Vagina (tissue), 2 donors: ENCODE measurements at regions of chr3 and their contacts with region 1.

Region 1: DNA sequence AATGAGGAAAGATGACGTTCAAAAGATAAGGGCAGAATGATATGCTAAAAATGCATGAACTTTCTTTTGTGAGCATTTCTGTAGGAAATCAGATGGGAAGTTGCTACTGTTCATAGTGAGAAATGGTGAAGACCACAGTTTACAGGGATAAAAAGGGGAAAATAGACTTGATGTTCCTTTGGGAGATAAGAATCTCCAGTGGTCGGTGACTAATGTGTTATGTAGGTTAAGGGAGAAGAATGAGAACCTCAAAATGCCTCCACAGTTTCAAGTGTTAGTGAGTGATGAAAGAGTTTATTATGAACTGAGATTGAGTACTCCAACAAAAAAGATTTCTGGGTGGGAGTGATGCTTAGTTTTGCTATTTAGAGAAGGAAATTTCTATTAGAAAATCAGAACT is 247.2 kb downstream of the LSAMP start:
- DNase-seq: no peak
- H3K4me3 ChIP-seq: no peak overlapping the region
- H3K27ac ChIP-seq: no peak overlapping the region
- H3K4me1 ChIP-seq: no peaks in the 10 kb centered on the region
- H3K27me3 ChIP-seq: no peaks in the 10 kb centered on the region
- CTCF ChIP-seq: no peak
- POLR2A ChIP-seq: no peak

Region 2: DNA sequence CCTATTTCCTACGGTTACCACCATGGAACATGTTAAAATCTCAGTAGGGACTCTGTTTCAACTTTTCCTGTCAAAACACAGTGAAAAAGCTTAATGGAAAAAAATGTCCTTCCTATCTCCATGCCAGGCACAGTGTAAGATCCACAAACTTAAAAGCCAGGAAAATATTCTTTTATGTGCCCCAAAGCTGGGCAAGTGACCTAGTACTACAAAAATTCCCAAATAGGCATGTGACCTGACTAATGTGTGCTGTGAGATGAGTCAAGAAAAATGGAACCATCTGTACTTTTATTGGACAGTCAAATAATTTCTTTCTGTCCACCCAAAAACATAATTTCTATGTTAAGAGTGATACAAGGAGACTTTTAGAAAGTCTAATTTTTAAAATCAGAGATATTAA is 1457.0 kb before region 1 on chr3:
- intact Hi-C with region 1: no loop called
- DNase-seq: no peak
- H3K4me3 ChIP-seq: no peak overlapping the region
- H3K27ac ChIP-seq: no peak overlapping the region
- H3K4me1 ChIP-seq: peaks cover 10% of the 10 kb centered on the region
- H3K27me3 ChIP-seq: no peaks in the 10 kb centered on the region
- CTCF ChIP-seq: no peak
- POLR2A ChIP-seq: no peak

Region 3: GRCh38 chr3:116155841-116156240 is 42.2 kb before region 1 on chr3:
- intact Hi-C with region 1: loop called (anchors 1 kb)
- DNase-seq: no peak
- H3K4me3 ChIP-seq: no peak overlapping the region
- H3K27ac ChIP-seq: no peak overlapping the region
- H3K4me1 ChIP-seq: no peaks in the 10 kb centered on the region
- H3K27me3 ChIP-seq: no peaks in the 10 kb centered on the region
- CTCF ChIP-seq: no peak
- POLR2A ChIP-seq: no peak